H1 (cell line): ENCODE measurements at regions of chr1 and their contacts with region 1.

Region 1: DNA sequence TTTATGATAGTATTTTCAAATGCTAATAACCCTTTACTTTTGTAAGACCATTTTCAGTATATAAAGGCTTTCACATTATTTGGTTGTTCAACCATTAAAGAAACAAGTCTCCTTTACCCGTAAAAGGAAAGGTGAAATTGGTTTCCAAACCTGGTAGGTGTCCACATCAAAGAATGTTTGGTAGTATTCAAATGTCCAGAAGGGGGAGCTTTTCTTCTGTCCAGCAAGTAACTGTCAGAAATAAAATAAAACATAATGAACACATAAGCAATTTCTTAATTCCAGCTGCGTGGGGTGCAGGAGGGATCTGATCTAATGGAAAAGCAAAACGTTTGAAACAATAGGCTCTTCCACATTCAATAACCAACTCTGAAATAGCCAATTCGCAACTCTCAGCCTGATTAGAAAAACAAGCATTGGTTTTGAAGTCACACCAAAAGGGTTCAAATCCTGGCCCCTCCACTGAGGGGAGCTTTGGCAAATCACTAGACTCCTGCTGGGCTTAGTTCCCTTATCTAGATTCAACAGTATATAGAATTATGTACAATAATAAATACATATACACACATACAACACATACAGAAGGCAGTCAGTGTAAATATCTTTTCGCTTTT is 11.0 kb downstream of the YIPF1 start:
- DNase-seq: no peak
- H3K4me3 ChIP-seq: no peak overlapping the region
- H3K27ac ChIP-seq: no peak overlapping the region
- H3K4me1 ChIP-seq: no peaks in the 10 kb centered on the region
- H3K27me3 ChIP-seq: no peaks in the 10 kb centered on the region
- CTCF ChIP-seq: peak in 2 of 3 experiments; percentile 41 to 56; a peak in 2 of 4 replicates
- EP300 ChIP-seq: no peak
- POLR2A ChIP-seq: no peak
- RAD21 ChIP-seq: peak; percentile 53 to 55

Region 2: GRCh38 chr1:53835491-53835890 is 43.1 kb before region 1 on chr1:
- CTCF ChIA-PET with region 1: no interaction called
- POLR2A ChIA-PET with region 1: no interaction called
- DNase-seq: no peak
- H3K4me3 ChIP-seq: no peak overlapping the region
- H3K27ac ChIP-seq: no peak overlapping the region
- H3K4me1 ChIP-seq: no peaks in the 10 kb centered on the region
- H3K27me3 ChIP-seq: no peaks in the 10 kb centered on the region
- CTCF ChIP-seq: no peak
- EP300 ChIP-seq: no peak
- POLR2A ChIP-seq: no peak
- RAD21 ChIP-seq: no peak

Region 3: DNA sequence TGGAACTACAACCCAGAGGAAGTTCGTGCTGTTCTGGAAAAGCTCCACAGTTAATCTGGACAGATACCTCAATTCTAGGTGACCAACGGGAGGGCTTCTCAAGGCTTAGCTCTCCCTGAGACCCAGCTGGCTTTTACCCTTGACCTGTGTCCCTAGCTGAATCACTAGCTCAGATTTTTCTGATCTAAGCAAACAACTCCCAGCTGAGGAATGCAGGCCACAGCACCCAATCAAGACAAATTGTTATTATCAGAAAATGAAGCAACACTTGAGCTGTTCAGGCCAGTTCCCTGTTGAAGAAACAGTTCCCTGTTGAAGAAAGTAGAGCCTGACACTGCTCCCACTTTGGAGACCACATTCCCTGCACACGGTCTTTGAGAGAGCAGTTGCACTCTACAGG is 31.3 kb after region 1 on chr1:
- CTCF ChIA-PET with region 1: interaction called, 17 read pairs
- POLR2A ChIA-PET with region 1: no interaction called
- DNase-seq: no peak
- H3K4me3 ChIP-seq: no peak overlapping the region
- H3K27ac ChIP-seq: no peak overlapping the region
- H3K4me1 ChIP-seq: peaks cover 7 to 13% (median 11%) of the 10 kb centered on the region in 4 experiments
- H3K27me3 ChIP-seq: no peaks in the 10 kb centered on the region
- CTCF ChIP-seq: no peak
- EP300 ChIP-seq: no peak
- POLR2A ChIP-seq: no peak
- RAD21 ChIP-seq: no peak

Region 4: DNA sequence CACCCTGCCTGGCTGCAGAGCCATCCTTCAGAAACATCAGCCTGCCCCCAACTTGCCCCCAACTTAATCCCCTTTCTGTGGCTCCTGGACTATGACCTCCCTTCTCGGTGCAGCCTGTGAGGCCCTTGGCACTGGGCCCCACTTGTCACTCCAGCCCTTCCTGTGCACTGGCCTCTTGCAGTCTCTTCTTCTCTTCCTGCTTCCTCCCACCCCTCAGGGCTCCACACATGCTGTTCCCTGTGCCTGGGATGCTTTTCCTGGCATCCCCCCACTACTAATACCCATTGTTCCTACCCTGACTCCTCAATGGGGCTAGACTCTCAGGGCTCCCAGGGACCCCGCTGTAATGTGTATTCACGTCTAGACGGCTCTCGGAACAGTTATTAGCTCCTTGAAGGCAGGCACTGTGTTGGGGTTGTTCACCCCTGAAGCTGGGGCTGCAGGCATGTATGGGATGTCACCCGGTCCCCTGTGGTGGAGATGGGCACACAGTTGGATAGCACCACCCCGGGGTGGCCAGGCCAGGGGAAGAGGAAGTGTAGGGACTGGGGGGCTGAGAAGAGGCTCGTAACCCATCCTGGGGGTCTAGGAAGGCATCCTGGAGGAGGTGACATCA is 134.9 kb after region 1 on chr1:
- CTCF ChIA-PET with region 1: no interaction called
- POLR2A ChIA-PET with region 1: no interaction called
- DNase-seq: peak in 1 of 2 experiments; percentile 43
- H3K4me3 ChIP-seq: no peak overlapping the region
- H3K27ac ChIP-seq: no peak overlapping the region
- H3K4me1 ChIP-seq: peaks cover 0 to 3% (median 0%) of the 10 kb centered on the region in 4 experiments; a peak in 1 of 7 replicates
- H3K27me3 ChIP-seq: no peaks in the 10 kb centered on the region
- CTCF ChIP-seq: no peak
- EP300 ChIP-seq: no peak
- POLR2A ChIP-seq: no peak
- RAD21 ChIP-seq: no peak